ENCODE measurements at regions of chr13 and their contacts with region 1.

Region 1: GRCh38 chr13:66950666-66951065 is 279.5 kb downstream of the PCDH9 start:
- DNase-seq: no peak
- ATAC-seq: no peak
- H3K4me3 ChIP-seq: no peak overlapping the region
- H3K4me3 Mint-ChIP-seq: no peak overlapping the region
- H3K27ac ChIP-seq: no peak overlapping the region
- H3K27ac Mint-ChIP-seq: no peak overlapping the region
- H3K4me1 ChIP-seq: peaks cover 0 to 7% of the 10 kb centered on the region in 2 donors
- H3K4me1 Mint-ChIP-seq: peaks cover 2% of the 10 kb centered on the region
- H3K27me3 ChIP-seq: no peaks in the 10 kb centered on the region
- H3K27me3 Mint-ChIP-seq: no peaks in the 10 kb centered on the region
- CTCF ChIP-seq: no peak

Region 2: DNA sequence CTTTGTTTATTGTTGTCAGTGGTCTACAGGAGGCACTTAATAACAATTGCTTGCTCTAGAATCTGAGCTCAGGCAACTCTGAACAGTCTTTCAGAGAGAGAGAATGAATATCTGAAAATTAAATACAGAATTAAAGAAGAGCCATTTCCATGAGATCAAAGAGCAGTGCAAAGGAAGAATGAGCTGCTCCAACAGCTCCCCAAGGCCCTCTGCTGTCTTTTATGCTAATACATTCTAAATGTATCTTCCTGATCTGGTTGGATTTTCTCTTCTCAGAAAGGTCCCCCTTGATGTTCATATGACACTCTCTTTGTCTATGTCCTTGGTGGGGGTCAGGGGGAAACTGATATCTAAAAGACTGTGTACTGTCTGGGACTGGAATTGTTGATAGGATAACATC is 750.1 kb before region 1 on chr13:
- CTCF ChIA-PET with region 1: no interaction called
- POLR2A ChIA-PET with region 1: no interaction called
- intact Hi-C with region 1: no loop called
- DNase-seq: no peak
- ATAC-seq: no peak
- H3K4me3 ChIP-seq: no peak overlapping the region
- H3K4me3 Mint-ChIP-seq: no peak overlapping the region
- H3K27ac ChIP-seq: no peak overlapping the region
- H3K27ac Mint-ChIP-seq: no peak overlapping the region
- H3K4me1 ChIP-seq: no peaks in the 10 kb centered on the region
- H3K4me1 Mint-ChIP-seq: no peaks in the 10 kb centered on the region
- H3K27me3 ChIP-seq: no peaks in the 10 kb centered on the region
- H3K27me3 Mint-ChIP-seq: no peaks in the 10 kb centered on the region
- CTCF ChIP-seq: no peak

Region 3: GRCh38 chr13:66835040-66835628 is 115.5 kb before region 1 on chr13:
- CTCF ChIA-PET with region 1: no interaction called
- POLR2A ChIA-PET with region 1: no interaction called
- intact Hi-C with region 1: no loop called
- DNase-seq: no peak
- ATAC-seq: no peak
- H3K4me3 ChIP-seq: no peak overlapping the region
- H3K4me3 Mint-ChIP-seq: no peak overlapping the region
- H3K27ac ChIP-seq: no peak overlapping the region
- H3K27ac Mint-ChIP-seq: no peak overlapping the region
- H3K4me1 ChIP-seq: peaks cover 10 to 11% of the 10 kb centered on the region in 2 donors
- H3K4me1 Mint-ChIP-seq: peaks cover 14% of the 10 kb centered on the region
- H3K27me3 ChIP-seq: no peaks in the 10 kb centered on the region
- H3K27me3 Mint-ChIP-seq: no peaks in the 10 kb centered on the region
- CTCF ChIP-seq: no peak

Region 4: GRCh38 chr13:66937423-66937822 is 13.2 kb before region 1 on chr13:
- CTCF ChIA-PET with region 1: no interaction called
- POLR2A ChIA-PET with region 1: no interaction called
- intact Hi-C with region 1: loop called (anchors 2 kb)
- DNase-seq: no peak
- ATAC-seq: no peak
- H3K4me3 ChIP-seq: no peak overlapping the region
- H3K4me3 Mint-ChIP-seq: no peak overlapping the region
- H3K27ac ChIP-seq: no peak overlapping the region
- H3K27ac Mint-ChIP-seq: no peak overlapping the region
- H3K4me1 ChIP-seq: peaks cover 0 to 12% of the 10 kb centered on the region in 2 donors
- H3K4me1 Mint-ChIP-seq: peaks cover 4% of the 10 kb centered on the region
- H3K27me3 ChIP-seq: no peaks in the 10 kb centered on the region
- H3K27me3 Mint-ChIP-seq: no peaks in the 10 kb centered on the region
- CTCF ChIP-seq: no peak

Region 5: GRCh38 chr13:67001363-67001762 is 50.7 kb after region 1 on chr13:
- CTCF ChIA-PET with region 1: no interaction called
- POLR2A ChIA-PET with region 1: no interaction called
- intact Hi-C with region 1: no loop called
- DNase-seq: no peak
- ATAC-seq: no peak
- H3K4me3 ChIP-seq: no peak overlapping the region
- H3K4me3 Mint-ChIP-seq: no peak overlapping the region
- H3K27ac ChIP-seq: no peak overlapping the region
- H3K27ac Mint-ChIP-seq: no peak overlapping the region
- H3K4me1 ChIP-seq: peaks cover 16 to 24% of the 10 kb centered on the region in 2 donors
- H3K4me1 Mint-ChIP-seq: peaks cover 20% of the 10 kb centered on the region
- H3K27me3 ChIP-seq: no peaks in the 10 kb centered on the region
- H3K27me3 Mint-ChIP-seq: no peaks in the 10 kb centered on the region
- CTCF ChIP-seq: no peak

Region 6: DNA sequence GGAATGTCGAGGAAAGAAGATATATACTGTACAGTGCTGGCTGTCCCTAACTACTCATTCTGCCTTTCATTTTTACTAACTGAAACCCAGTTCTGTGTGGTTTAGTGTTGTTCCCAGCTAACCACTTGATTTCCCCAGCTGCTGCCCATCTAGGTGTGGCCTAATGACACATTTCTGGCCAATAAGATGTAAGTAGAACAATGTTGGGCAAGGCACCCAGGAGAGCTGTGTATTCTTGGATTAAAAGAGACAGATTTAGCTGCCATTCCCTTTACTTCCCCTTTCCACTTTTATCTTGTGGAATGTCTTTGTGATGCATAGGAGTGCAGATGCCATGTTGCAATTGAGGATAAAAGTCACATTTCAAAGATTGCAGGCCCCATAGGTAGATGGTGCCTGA is 307.8 kb after region 1 on chr13:
- CTCF ChIA-PET with region 1: no interaction called
- POLR2A ChIA-PET with region 1: no interaction called
- intact Hi-C with region 1: no loop called
- DNase-seq: no peak
- ATAC-seq: no peak
- H3K4me3 ChIP-seq: no peak overlapping the region
- H3K4me3 Mint-ChIP-seq: no peak overlapping the region
- H3K27ac ChIP-seq: no peak overlapping the region
- H3K27ac Mint-ChIP-seq: no peak overlapping the region
- H3K4me1 ChIP-seq: no peaks in the 10 kb centered on the region
- H3K4me1 Mint-ChIP-seq: no peaks in the 10 kb centered on the region
- H3K27me3 ChIP-seq: no peaks in the 10 kb centered on the region
- H3K27me3 Mint-ChIP-seq: no peaks in the 10 kb centered on the region
- CTCF ChIP-seq: no peak